CD4-positive, alpha-beta T cell (primary cell): ENCODE measurements at regions of chr2 and their contacts with region 1.

Region 1: DNA sequence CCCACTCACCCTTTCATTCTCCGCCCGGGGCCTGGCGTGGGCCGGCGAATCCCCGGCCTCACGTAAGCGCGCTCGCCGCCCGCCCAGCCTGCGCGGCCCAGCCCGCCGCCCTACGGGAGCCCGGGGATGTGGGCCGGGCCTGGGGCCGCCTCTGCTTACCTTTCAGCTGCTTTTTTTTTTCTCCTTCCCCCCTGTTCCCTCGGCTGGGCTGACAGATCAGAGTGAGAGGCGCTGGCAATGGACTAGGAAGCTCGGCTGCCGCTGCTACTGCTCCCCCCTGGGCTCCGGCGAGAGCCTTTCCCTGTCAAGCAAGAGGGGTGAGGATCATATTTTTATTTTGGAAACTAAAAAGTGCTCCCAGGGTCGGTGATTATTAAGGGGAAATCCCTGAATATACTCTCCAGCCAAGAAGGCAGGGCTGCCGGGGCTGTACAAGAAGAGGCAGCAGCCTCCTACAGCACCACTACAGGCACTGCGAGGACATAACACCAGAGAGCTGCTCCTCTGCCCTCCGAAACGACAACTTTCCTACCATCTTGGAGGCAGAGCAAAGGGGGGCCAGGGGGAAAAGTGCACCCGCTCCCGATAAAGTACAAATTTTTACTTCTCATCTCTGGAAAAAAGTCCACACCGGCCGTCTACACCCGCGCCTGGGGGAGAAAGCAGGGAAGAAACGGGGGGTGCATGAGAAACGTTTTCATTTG is at the start of gene INO80D:
- DNase-seq: peak; percentile 62 to 92 (median 72)
- ATAC-seq: peak; percentile 94
- H3K4me3 ChIP-seq: peak within 1 kb of the TSS; percentile 90
- H3K4me3 Mint-ChIP-seq: peak within 1 kb of the TSS; percentile 98
- H3K27ac ChIP-seq: peak within 1 kb of the TSS; percentile 94 to 95
- H3K27ac Mint-ChIP-seq: peak within 1 kb of the TSS; percentile 100
- H3K4me1 ChIP-seq: peaks cover 26% of the 10 kb centered on the region
- H3K4me1 Mint-ChIP-seq: peaks cover 53% of the 10 kb centered on the region
- H3K27me3 ChIP-seq: no peaks in the 10 kb centered on the region
- H3K27me3 Mint-ChIP-seq: no peaks in the 10 kb centered on the region
- CTCF ChIP-seq: peak; percentile 60
- total RNA-seq, gene INO80D: 45.3 to 48.9 TPM

Region 2: DNA sequence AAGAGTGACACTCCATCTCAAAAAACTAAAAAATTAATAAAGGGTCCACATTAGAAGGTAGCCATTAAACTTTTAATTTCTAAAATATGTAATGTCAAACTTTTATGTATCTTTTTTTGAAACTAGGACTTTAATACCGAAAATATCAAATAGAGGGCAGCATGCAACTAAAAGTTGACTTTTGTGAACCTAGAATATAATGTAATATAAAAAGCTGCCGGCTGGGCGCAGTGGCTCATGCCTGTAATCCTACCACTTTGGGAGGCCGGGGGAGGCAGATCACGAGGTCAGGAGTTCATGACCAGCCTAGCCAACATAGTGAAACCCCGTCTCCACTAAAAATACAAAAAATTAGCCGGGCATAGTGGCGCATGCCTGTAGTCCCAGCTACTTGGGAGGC is 62.7 kb before region 1 on chr2:
- CTCF ChIA-PET with region 1: no interaction called
- POLR2A ChIA-PET with region 1: no interaction called
- intact Hi-C with region 1: loop called in 1 of 2 experiments (anchors 10 kb)
- DNase-seq: no peak
- ATAC-seq: no peak
- H3K4me3 ChIP-seq: no peak overlapping the region
- H3K4me3 Mint-ChIP-seq: no peak overlapping the region
- H3K27ac ChIP-seq: no peak overlapping the region
- H3K27ac Mint-ChIP-seq: no peak overlapping the region
- H3K4me1 ChIP-seq: no peaks in the 10 kb centered on the region
- H3K4me1 Mint-ChIP-seq: no peaks in the 10 kb centered on the region
- H3K27me3 ChIP-seq: no peaks in the 10 kb centered on the region
- H3K27me3 Mint-ChIP-seq: no peaks in the 10 kb centered on the region
- CTCF ChIP-seq: no peak

Region 3: GRCh38 chr2:206159346-206160124 is 73.6 kb after region 1 on chr2 and contains the starts of genes EEF1B2 and NDUFS1:
- CTCF ChIA-PET with region 1: interaction called, 13 read pairs
- POLR2A ChIA-PET with region 1: interaction called, 34 read pairs
- intact Hi-C with region 1: loop called (anchors 1 kb)
- DNase-seq: peak; percentile 91 to 99 (median 95)
- ATAC-seq: peak; percentile 82
- H3K4me3 ChIP-seq: peak within 1 kb of the TSS; percentile 82
- H3K4me3 Mint-ChIP-seq: peak within 1 kb of the TSS; percentile 99
- H3K27ac ChIP-seq: peak within 1 kb of the TSS; percentile 85 to 92
- H3K27ac Mint-ChIP-seq: peak within 1 kb of the TSS; percentile 97
- H3K4me1 ChIP-seq: peaks cover 39% of the 10 kb centered on the region
- H3K4me1 Mint-ChIP-seq: peaks cover 71% of the 10 kb centered on the region
- H3K27me3 ChIP-seq: no peaks in the 10 kb centered on the region
- H3K27me3 Mint-ChIP-seq: no peaks in the 10 kb centered on the region
- CTCF ChIP-seq: no peak
- total RNA-seq, gene EEF1B2: 1,109 to 1,132 TPM
- total RNA-seq, gene NDUFS1: 33.4 to 34.3 TPM

Region 4: DNA sequence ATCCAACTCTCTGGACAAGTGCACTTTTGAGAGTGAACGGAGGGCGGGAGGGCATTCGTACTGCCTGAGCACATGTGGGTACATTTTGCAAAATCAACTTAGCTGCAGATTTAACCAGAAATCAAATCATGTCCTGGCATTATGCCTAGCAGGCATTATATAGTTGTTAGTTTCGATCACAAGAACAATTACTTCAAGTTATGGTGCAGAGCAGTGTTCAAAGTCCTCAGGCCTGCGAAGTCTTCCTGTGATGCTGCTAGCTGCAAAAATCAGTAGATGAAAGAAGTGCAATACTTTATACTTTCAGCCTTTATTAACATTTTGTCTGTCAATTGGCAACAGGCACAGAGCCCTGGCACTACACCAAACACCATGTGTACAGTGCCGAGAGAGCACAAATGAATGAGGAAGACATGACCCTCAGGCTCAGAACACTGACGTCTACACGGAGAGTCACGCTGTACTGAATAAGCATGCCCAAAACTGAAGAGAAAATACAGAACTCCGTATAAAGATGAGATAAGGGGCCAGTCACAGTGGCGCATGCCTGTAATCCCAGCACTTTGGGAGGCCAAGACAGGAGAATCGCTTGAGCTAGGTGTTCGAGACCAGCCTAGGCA is 1351.7 kb after region 1 on chr2:
- CTCF ChIA-PET with region 1: no interaction called
- POLR2A ChIA-PET with region 1: no interaction called
- intact Hi-C with region 1: no loop called
- DNase-seq: no peak
- ATAC-seq: no peak
- H3K4me3 ChIP-seq: no peak overlapping the region
- H3K4me3 Mint-ChIP-seq: no peak overlapping the region
- H3K27ac ChIP-seq: no peak overlapping the region
- H3K27ac Mint-ChIP-seq: no peak overlapping the region
- H3K4me1 ChIP-seq: no peaks in the 10 kb centered on the region
- H3K4me1 Mint-ChIP-seq: no peaks in the 10 kb centered on the region
- H3K27me3 ChIP-seq: no peaks in the 10 kb centered on the region
- H3K27me3 Mint-ChIP-seq: no peaks in the 10 kb centered on the region
- CTCF ChIP-seq: no peak